Activated naive CD4-positive, alpha-beta T cell treated with anti-CD3 and anti-CD28 coated beads for 36 hours (primary cell): ENCODE measurements at regions of chr5 and their contacts with region 1.

Region 1: GRCh38 chr5:79020861-79021561 is 35.9 kb upstream of the ARSB start:
- DNase-seq: peak; percentile 71
- H3K4me3 Mint-ChIP-seq: no peak overlapping the region
- H3K27ac Mint-ChIP-seq: no peak overlapping the region
- H3K4me1 Mint-ChIP-seq: peaks cover 8% of the 10 kb centered on the region
- H3K27me3 Mint-ChIP-seq: peaks cover 46% of the 10 kb centered on the region

Region 2: GRCh38 chr5:79035237-79035636 is 14.2 kb after region 1 on chr5:
- CTCF ChIA-PET with region 1: interaction called, 11 read pairs
- intact Hi-C with region 1: no loop called
- DNase-seq: no peak
- H3K4me3 Mint-ChIP-seq: no peak overlapping the region
- H3K27ac Mint-ChIP-seq: no peak overlapping the region
- H3K4me1 Mint-ChIP-seq: no peaks in the 10 kb centered on the region
- H3K27me3 Mint-ChIP-seq: peaks cover 3% of the 10 kb centered on the region

Region 3: DNA sequence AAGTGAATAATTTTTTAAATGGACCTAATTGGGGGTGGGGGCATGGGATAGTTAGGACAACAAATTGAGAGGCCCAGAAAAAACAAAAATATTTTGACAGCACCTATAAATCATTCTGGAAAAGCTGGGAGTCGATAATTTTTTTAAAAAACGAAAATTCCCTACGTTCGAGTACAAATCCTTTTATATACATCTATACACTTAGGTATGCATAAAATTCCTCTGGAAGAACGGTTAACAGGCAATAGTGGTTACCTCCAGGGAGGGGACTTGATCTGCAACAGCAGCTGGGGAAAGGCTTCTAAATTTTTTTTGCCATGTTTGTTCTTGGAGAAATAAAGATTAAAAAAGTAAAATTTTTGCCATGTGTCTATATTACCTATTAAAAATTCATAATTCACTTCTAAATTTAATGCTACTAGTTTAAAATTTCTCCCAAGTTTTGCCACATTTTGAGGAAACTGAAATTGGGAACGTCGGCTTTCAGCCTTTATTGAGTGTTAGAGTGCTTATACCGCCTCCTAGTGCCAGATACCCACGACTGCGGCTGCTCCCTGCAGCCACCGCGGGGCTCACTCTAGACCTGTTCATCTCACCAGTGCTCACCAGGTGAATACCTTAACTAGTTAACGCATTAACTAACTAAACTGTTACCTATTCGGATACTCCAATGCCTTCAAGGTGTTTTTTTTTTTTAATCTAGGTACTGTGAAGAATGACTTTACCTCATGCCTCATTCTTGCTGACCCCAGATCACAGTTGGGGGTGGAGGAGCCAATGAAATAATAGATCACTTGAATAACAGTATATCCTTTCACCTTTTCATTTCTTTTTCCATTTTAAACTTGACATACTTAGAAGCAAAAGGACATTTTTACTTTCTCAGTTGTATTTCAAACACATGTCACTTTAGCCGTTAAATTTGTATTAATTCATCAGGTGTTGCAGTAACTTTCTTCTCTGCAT is 88.8 kb after region 1 on chr5:
- CTCF ChIA-PET with region 1: interaction called, 73 read pairs
- intact Hi-C with region 1: loop called (anchors 1 kb)
- DNase-seq: peak; percentile 63
- H3K4me3 Mint-ChIP-seq: no peak overlapping the region
- H3K27ac Mint-ChIP-seq: no peak overlapping the region
- H3K4me1 Mint-ChIP-seq: peaks cover 4% of the 10 kb centered on the region
- H3K27me3 Mint-ChIP-seq: peaks cover 46% of the 10 kb centered on the region

Region 4: DNA sequence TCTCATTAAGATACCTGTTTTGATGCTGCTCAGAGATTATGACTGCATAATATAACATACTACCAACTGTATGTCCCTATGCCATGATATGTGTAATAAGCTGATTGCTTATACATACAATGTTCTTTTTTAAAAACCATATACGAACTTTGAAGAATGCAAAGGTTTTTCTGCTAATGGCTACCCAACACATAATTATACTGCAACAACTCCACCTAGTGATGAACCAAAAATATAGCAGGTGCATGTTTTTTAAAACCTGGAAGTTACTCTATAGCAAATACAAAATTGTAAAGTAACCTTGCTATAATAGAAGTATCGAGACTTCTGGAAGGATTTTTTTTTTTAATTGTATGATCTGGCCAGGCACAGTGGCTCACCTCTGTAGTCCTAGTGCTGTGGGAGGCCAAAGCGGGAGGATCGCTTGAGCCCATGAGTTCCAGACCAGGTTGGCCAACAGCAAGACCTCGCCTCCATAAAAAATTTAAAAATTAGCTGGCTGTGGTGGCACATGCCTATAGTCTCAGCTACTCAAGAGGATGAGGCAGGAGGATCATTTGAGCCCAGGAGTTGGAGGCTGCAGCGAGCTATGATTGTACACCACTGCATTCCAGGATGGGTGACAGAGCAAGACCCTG is 443.8 kb after region 1 on chr5:
- CTCF ChIA-PET with region 1: interaction called, 24 read pairs
- intact Hi-C with region 1: loop called (anchors 1 kb)
- DNase-seq: no peak
- H3K4me3 Mint-ChIP-seq: no peak overlapping the region
- H3K27ac Mint-ChIP-seq: no peak overlapping the region
- H3K4me1 Mint-ChIP-seq: peaks cover 2% of the 10 kb centered on the region
- H3K27me3 Mint-ChIP-seq: peaks cover 7% of the 10 kb centered on the region

Region 5: GRCh38 chr5:79535477-79536192 is 514.6 kb after region 1 on chr5:
- CTCF ChIA-PET with region 1: interaction called, 4 read pairs
- intact Hi-C with region 1: loop called (anchors 10 kb)
- DNase-seq: no peak
- H3K4me3 Mint-ChIP-seq: no peak overlapping the region
- H3K27ac Mint-ChIP-seq: no peak overlapping the region
- H3K4me1 Mint-ChIP-seq: no peaks in the 10 kb centered on the region
- H3K27me3 Mint-ChIP-seq: no peaks in the 10 kb centered on the region

Region 6: GRCh38 chr5:79857714-79858409 is 836.9 kb after region 1 on chr5:
- CTCF ChIA-PET with region 1: interaction called, 3 read pairs
- intact Hi-C with region 1: loop called (anchors 5 kb)
- DNase-seq: peak; percentile 92
- H3K4me3 Mint-ChIP-seq: no peak overlapping the region
- H3K27ac Mint-ChIP-seq: no peak overlapping the region
- H3K4me1 Mint-ChIP-seq: no peaks in the 10 kb centered on the region
- H3K27me3 Mint-ChIP-seq: no peaks in the 10 kb centered on the region

Region 7: GRCh38 chr5:79878721-79879336 is 857.8 kb after region 1 on chr5:
- CTCF ChIA-PET with region 1: no interaction called
- intact Hi-C with region 1: no loop called
- DNase-seq: peak; percentile 65
- H3K4me3 Mint-ChIP-seq: no peak overlapping the region
- H3K27ac Mint-ChIP-seq: no peak overlapping the region
- H3K4me1 Mint-ChIP-seq: no peaks in the 10 kb centered on the region
- H3K27me3 Mint-ChIP-seq: no peaks in the 10 kb centered on the region